Breast epithelium (tissue), 4 donors: ENCODE measurements at regions of chr3 and their contacts with region 1.

Region 1: DNA sequence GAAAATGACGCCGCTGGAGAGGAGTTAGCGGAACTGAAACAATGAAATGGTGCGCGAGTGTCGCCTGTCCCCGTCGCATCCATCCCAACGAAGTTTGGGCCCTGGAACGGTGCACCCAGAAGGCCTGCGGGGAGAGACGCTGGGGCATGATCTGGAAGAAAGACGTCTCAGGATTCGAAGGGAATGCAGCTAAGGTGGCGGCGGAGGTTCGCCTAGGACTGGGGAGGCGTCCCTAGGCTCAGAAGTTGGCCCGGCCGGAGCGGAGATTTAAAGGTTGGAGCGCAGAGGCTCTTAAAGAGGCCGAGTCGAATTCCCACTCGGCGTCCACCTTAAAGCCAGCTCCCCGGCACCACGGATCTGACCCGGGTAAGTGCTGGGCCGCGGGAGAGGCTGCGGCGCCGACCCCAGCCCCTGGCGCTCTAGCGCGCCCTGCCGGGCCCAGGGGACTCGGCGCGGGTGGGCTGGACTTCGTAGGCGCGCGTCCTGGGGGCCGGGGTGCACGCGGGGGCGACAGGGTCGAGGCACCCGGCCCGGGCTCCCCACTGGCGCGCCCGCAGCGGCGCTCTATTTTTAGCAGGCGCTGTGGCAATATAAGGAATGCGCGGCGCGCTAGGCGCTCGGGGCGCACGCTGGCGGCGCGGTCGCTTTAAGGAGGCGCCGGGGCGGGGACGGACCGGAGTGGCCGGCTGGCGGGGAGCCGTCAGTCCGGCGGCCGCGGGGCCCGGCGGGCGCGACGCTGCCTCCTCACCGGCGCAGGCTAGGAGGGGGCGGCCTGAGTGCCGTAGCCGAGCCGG is at the start of gene MRAS:
- DNase-seq: peak; percentile 55 to 69
- H3K4me3 ChIP-seq: peak within 1 kb of the TSS; percentile 82 to 88 (median 85)
- H3K27ac ChIP-seq: peak within 1 kb of the TSS; percentile 95 to 96
- H3K4me1 ChIP-seq: peaks cover 0 to 8% of the 10 kb centered on the region in 2 donors
- H3K27me3 ChIP-seq: no peaks in the 10 kb centered on the region
- CTCF ChIP-seq: peak in 1 of 3 donors; percentile 40
- POLR2A ChIP-seq: no peak
- total RNA-seq, gene MRAS: 39.0 to 157 (median 74.8) TPM

Region 2: GRCh38 chr3:138203938-138204337 is 144.2 kb before region 1 on chr3:
- intact Hi-C with region 1: no loop called
- DNase-seq: no peak
- H3K4me3 ChIP-seq: no peak overlapping the region
- H3K27ac ChIP-seq: no peak overlapping the region
- H3K4me1 ChIP-seq: no peaks in the 10 kb centered on the region
- H3K27me3 ChIP-seq: no peaks in the 10 kb centered on the region
- CTCF ChIP-seq: no peak
- POLR2A ChIP-seq: no peak

Region 3: DNA sequence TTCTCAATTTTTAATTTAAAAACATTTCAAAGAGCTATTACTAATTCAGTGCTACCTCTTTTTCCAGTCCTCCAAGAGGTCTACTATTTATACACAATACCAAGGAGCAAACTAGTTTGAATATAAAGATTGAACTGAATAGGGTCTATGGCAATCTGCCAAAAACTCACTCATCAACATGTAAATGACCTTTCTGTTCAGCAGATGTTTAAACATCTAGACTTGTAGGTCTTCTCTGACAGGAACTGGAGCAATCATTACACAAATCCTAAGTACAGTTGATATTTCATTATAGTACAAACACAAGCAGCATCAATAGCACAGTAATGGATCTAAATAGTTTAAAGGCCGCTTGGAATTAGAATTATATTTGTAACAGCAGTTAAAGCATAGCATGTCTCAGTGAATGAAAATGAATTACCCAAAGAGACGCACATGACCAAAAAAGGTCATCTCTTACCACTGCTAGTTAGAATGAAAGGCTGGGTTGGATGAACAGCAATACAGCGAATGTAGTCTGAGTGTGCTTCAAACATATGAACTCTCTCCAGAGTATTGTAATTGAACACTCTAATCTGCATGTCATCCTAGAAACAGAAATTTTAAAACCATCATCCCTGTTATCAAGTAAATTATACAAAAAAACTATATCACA is 1030.6 kb after region 1 on chr3:
- intact Hi-C with region 1: loop called (anchors 5 kb)
- DNase-seq: no peak
- H3K4me3 ChIP-seq: no peak overlapping the region
- H3K27ac ChIP-seq: no peak overlapping the region
- H3K4me1 ChIP-seq: no peaks in the 10 kb centered on the region
- H3K27me3 ChIP-seq: no peaks in the 10 kb centered on the region
- CTCF ChIP-seq: no peak
- POLR2A ChIP-seq: no peak